Activated CD4-positive, alpha-beta T cell treated with anti-CD3 and anti-CD28 coated beads for 36 hours (primary cell): ENCODE measurements at regions of chr15 and their contacts with region 1.

Region 1: DNA sequence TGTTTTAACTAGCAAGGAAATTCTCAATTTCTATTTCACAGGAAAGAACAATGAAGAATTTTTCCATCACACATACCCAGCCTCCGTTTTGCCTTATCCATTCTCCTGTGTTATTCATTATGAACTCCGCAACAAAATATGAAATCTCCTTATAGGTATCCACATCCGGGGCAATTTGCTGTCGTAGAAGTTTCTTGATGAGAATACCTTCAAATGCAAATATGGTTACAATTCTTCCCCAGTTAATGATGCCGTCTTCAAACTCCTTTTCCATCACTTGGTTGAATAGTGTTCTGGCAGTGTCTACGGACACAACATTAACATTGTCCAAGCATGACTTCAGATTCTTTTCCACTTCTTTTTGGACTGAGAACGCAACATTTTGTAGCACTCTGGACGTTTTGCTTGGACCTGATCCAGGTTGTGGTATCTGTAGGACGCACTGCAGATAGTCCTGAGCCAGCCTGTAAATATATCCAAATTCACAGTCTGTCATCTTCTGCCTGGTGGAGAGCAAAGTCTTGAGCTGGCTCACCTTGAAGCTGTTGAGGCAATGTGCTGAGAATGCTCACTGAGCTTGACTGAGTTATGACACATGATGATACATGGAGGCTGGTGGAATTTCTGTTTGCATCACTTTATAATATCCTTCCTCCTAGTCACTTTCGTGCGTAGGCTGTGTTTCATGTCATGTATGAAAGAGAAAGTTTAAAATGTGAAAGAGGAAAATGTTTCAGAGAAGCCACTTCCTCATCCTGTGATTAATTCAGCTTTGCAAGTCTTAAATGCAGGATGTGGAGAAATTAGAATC is at the start of gene BCL2A1:
- DNase-seq: peak; percentile 83
- ATAC-seq: peak; percentile 72
- H3K4me3 Mint-ChIP-seq: peak within 1 kb of the TSS; percentile 92
- H3K27ac Mint-ChIP-seq: peak within 1 kb of the TSS; percentile 99
- H3K4me1 Mint-ChIP-seq: peaks cover 46% of the 10 kb centered on the region
- H3K27me3 Mint-ChIP-seq: no peaks in the 10 kb centered on the region
- total RNA-seq, gene BCL2A1: 82.2 to 103 TPM

Region 2: DNA sequence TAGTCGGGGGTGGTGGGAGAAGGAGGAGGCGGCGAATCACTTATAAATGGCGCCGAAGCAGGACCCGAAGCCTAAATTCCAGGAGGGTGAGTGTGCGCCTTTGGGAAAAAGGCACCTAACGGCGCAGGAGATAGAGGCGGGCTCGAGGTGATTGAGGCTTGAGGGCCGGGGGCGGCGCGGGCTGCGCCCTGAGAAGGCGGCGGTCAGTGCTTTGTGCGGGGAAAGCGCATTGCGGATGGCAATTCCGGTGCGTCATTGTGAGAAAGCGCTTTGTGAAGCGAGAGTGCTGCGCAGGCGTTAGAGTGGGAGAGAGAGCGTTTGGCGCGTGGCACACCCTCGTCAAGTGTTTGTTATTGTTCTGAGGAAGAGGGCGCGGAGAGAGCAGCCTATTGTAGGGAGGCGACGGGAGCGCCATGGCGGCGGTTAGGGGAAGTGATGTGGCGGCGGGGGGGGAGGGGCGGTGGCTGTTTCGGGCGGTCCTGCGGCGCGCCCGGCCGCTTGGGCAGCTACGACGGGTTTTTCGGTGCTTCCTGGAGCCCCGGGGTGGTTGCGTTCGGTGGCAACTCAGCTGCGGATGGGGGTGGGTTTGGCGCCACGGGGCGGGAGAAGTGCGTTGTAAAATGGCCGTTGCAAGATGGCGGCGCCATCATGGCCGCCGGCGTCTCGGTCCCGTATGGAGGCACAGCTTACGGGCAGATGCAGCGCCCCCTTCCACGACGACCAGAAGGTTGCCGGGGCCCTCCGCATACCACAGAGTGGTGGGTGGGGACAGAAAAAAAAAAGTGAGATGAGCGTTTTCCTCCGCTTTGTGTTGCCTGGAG is 1097.6 kb before region 1 on chr15:
- CTCF ChIA-PET with region 1: no interaction called
- POLR2A ChIA-PET with region 1: interaction called, 3 read pairs
- intact Hi-C with region 1: loop called in 1 of 2 experiments (anchors 10 kb)
- DNase-seq: peak; percentile 96
- ATAC-seq: peak; percentile 80
- H3K4me3 Mint-ChIP-seq: peak overlapping the region; percentile 99
- H3K27ac Mint-ChIP-seq: peak overlapping the region; percentile 99
- H3K4me1 Mint-ChIP-seq: peaks cover 34% of the 10 kb centered on the region
- H3K27me3 Mint-ChIP-seq: no peaks in the 10 kb centered on the region

Region 3: GRCh38 chr15:78944669-78945407 is 1026.0 kb before region 1 on chr15 and contains the start of gene CTSH:
- CTCF ChIA-PET with region 1: no interaction called
- POLR2A ChIA-PET with region 1: no interaction called
- intact Hi-C with region 1: no loop called
- DNase-seq: peak; percentile 69
- ATAC-seq: peak; percentile 72
- H3K4me3 Mint-ChIP-seq: peak within 1 kb of the TSS; percentile 57
- H3K27ac Mint-ChIP-seq: peak within 1 kb of the TSS; percentile 13
- H3K4me1 Mint-ChIP-seq: peaks cover 3% of the 10 kb centered on the region
- H3K27me3 Mint-ChIP-seq: peaks cover 15% of the 10 kb centered on the region
- total RNA-seq, gene CTSH: 11.2 to 15.1 TPM

Region 4: GRCh38 chr15:79896637-79897379 is 74.0 kb before region 1 on chr15 and contains the start of gene MTHFS:
- CTCF ChIA-PET with region 1: interaction called, 7 read pairs
- POLR2A ChIA-PET with region 1: interaction called, 14 read pairs
- intact Hi-C with region 1: loop called (anchors 1 kb)
- DNase-seq: peak; percentile 87
- ATAC-seq: peak; percentile 81
- H3K4me3 Mint-ChIP-seq: peak within 1 kb of the TSS; percentile 97
- H3K27ac Mint-ChIP-seq: peak within 1 kb of the TSS; percentile 100
- H3K4me1 Mint-ChIP-seq: peaks cover 46% of the 10 kb centered on the region
- H3K27me3 Mint-ChIP-seq: no peaks in the 10 kb centered on the region
- total RNA-seq, gene MTHFS: 36.1 to 48.5 TPM

Region 5: GRCh38 chr15:79957741-79958140 is 13.1 kb before region 1 on chr15:
- CTCF ChIA-PET with region 1: interaction called, 4 read pairs
- POLR2A ChIA-PET with region 1: no interaction called
- intact Hi-C with region 1: loop called in 1 of 2 experiments (anchors 1 kb)
- DNase-seq: no peak
- ATAC-seq: no peak
- H3K4me3 Mint-ChIP-seq: no peak overlapping the region
- H3K27ac Mint-ChIP-seq: no peak overlapping the region
- H3K4me1 Mint-ChIP-seq: peaks cover 51% of the 10 kb centered on the region
- H3K27me3 Mint-ChIP-seq: no peaks in the 10 kb centered on the region

Region 6: DNA sequence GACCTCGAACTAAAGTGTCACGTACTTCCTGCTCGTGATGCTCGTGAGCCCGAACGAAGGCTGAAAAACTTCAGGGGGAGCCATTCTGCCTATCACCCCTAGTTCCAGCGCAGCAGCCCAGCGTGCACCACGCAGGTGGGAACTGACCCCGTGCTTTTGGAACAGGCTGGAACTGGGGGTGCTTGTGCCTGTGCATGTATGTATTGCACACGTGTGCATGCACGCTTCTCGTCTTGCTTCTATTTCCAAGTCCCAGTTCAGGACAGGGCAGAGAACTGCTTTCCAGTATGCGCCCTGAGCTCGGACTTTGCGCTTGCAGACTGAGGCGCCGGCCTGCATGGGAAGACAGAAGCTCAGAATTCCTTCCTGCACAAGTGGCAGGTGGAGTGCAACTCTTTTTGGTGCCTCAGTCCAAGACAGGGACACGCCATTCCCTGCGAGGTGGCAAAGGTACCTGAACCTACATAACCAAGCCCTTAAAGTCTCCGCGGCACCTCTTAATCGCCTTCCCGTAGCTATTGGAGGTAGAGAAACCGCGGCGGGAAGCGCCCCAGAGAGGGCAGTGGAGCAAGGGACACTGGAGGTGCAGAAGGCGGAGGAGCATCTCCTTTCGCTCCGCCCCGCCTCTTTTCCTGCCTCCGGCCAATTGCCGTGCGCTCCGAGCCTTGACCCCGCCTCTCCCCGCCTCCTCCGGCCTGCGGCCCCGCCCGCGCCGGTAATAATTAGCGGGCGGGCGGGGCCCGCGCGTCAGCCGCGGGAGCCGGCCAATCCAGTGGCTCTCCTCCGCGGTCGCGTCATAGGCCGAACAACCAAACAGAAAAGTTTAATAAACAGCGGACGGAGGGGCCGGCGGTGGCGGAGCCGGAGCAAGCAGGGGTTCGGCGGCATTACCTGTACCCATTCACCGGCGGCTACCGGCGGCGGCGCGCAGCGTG is 88.3 kb after region 1 on chr15 and contains the start of gene ZFAND6:
- CTCF ChIA-PET with region 1: no interaction called
- POLR2A ChIA-PET with region 1: interaction called, 3 read pairs
- intact Hi-C with region 1: loop called (anchors 1 to 2 kb)
- DNase-seq: peak; percentile 97
- ATAC-seq: peak; percentile 83
- H3K4me3 Mint-ChIP-seq: peak within 1 kb of the TSS; percentile 85
- H3K27ac Mint-ChIP-seq: peak within 1 kb of the TSS; percentile 87
- H3K4me1 Mint-ChIP-seq: peaks cover 25% of the 10 kb centered on the region
- H3K27me3 Mint-ChIP-seq: no peaks in the 10 kb centered on the region
- total RNA-seq, gene ZFAND6: 30.2 to 37.2 TPM

Region 7: GRCh38 chr15:80736560-80736959 is 765.7 kb after region 1 on chr15:
- CTCF ChIA-PET with region 1: no interaction called
- POLR2A ChIA-PET with region 1: no interaction called
- intact Hi-C with region 1: no loop called
- DNase-seq: no peak
- ATAC-seq: no peak
- H3K4me3 Mint-ChIP-seq: no peak overlapping the region
- H3K27ac Mint-ChIP-seq: no peak overlapping the region
- H3K4me1 Mint-ChIP-seq: no peaks in the 10 kb centered on the region
- H3K27me3 Mint-ChIP-seq: no peaks in the 10 kb centered on the region

Region 8: DNA sequence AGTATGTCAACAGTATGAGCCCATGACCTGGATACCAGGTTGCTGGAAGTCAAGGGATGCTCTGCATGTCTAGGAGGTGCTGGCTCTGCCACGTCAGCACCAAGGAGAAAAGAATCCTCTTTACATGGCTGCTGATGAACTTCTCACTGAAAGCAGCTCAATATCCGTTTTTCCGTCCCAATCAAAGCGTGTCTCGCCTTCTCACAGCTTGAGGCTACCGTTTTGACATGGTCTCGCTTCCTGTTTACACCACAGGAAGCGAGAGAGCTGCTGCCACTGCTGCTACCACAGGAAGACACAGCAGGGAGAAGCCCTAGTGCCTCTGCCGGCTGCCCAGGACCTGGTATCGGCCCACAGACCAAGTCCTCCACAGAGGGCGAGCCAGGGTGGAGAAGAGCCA is 1325.8 kb after region 1 on chr15:
- CTCF ChIA-PET with region 1: no interaction called
- POLR2A ChIA-PET with region 1: no interaction called
- intact Hi-C with region 1: loop called (anchors 2 to 5 kb)
- DNase-seq: peak; percentile 86
- ATAC-seq: peak; percentile 54
- H3K4me3 Mint-ChIP-seq: peak overlapping the region; percentile 94
- H3K27ac Mint-ChIP-seq: peak overlapping the region; percentile 98
- H3K4me1 Mint-ChIP-seq: peaks cover 62% of the 10 kb centered on the region
- H3K27me3 Mint-ChIP-seq: no peaks in the 10 kb centered on the region